Mammary epithelial cell (primary cell): ENCODE measurements at regions of chr19 and their contacts with region 1.

Region 1: DNA sequence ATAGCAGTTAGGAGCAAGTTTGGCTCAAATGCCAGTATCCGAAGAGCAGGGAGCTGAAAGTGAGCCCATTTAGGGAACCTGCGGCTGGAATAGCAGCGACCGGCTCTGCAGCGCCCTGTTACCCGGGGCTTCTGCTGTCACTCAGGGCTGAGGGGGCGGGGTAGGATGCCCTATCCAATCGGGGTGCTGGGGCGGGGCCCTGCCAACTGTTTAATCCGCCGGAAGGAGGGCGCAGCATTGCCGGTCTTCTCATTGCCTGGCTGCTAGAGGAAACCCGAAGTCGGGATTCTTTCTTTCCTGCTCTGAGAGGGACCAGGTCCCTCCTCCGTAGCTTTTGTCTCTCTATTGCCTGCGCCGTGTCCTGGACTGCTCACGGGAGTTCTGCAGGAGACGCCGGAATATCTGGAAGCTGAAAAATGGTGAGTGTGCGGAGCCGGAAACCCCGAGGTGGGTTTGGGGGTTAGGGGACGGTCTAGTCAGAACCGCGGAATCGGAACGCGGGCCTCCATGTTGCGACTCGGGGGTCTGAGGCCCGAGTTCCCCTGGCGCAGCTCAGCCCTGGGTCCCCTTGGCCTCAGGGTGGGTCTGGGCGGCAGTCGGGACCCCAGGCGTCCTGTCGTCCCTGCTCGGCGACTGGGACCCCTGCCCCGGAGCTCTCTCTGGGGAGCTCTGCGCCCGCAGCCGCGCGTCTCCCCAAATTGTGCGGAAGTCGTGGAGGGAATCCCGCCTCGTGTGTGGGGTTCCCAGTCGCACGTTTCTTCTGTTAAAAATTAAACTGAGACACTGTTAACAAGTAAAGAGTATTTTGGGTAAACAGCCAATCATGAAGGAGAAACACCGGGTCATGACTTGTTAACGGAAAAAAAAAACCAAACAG is 22.8 kb downstream of the ZNF763 start:
- DNase-seq: peak; percentile 91
- H3K4me3 ChIP-seq: peak overlapping the region; percentile 83 to 86 (median 84)
- H3K27ac ChIP-seq: peak overlapping the region; percentile 24
- H3K4me1 ChIP-seq: no peaks in the 10 kb centered on the region
- H3K27me3 ChIP-seq: no peaks in the 10 kb centered on the region
- CTCF ChIP-seq: no peak

Region 2: DNA sequence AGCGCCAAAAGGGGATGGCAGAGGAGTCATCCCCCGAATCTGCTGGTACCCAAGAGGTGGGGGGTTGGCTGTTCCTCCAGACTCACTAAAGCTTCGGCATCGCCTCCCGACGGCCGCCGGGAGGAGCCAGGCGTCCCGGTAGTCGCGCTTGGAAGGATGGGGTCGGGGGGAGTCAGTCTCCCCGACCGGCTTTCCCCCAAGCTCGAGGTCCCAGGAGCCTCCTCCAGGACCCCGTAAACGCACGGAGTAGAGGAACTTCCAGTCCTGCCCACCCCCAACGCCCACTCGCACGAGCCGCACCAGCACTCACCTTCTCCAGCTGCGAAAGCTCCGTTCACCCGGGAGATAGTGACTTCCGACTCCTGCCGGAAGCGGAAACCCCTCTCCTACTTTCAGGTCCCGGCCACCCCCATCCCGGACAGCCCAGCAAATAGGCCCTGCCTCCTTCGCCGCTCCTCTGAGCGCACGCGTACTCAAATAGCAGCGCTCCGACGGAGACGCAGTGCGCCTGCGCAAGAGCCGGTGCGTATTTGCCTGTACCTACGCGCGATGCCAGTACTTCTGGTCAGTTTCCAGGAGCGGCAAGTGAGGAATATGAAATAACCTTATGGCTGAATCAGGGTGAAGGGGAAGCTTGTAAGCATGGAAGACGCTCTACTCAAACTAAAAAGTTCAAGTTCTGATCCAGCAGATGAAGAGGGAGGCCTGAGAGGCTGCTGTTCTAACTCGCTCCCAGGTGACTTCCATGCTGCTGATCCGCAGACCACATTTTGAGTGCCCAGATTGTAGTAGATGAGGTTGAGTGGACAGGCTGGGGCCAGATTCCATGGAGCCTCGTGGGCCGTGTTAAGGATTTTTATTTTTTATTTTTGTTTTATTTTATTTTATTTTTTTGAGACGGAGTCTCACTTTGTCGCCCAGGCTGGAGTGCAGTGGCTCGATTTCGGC is 428.5 kb before region 1 on chr19 and contains the start of gene ELOF1:
- CTCF ChIA-PET with region 1: interaction called, 3 read pairs
- dilution Hi-C with region 1: no loop called
- in situ Hi-C with region 1: no loop called
- intact Hi-C with region 1: loop called (anchors 1 kb)
- DNase-seq: peak; percentile 97
- H3K4me3 ChIP-seq: peak within 1 kb of the TSS; percentile 66 to 97 (median 79)
- H3K27ac ChIP-seq: peak within 1 kb of the TSS; percentile 43
- H3K4me1 ChIP-seq: peaks cover 6% of the 10 kb centered on the region
- H3K27me3 ChIP-seq: no peaks in the 10 kb centered on the region
- CTCF ChIP-seq: peak in 1 of 2 donors; percentile 40
- total RNA-seq, gene ELOF1: 34.7 to 71.2 TPM

Region 3: GRCh38 chr19:11814029-11814699 is 173.5 kb before region 1 on chr19 and contains the start of gene ZNF440:
- CTCF ChIA-PET with region 1: interaction called, 4 read pairs
- dilution Hi-C with region 1: no loop called
- in situ Hi-C with region 1: no loop called
- intact Hi-C with region 1: loop called (anchors 5 kb)
- DNase-seq: peak; percentile 92
- H3K4me3 ChIP-seq: peak within 1 kb of the TSS; percentile 95 to 97 (median 97)
- H3K27ac ChIP-seq: peak within 1 kb of the TSS; percentile 72
- H3K4me1 ChIP-seq: no peaks in the 10 kb centered on the region
- H3K27me3 ChIP-seq: no peaks in the 10 kb centered on the region
- CTCF ChIP-seq: no peak
- total RNA-seq, gene ZNF440: 8.3 to 10.4 TPM

Region 4: GRCh38 chr19:11924886-11925650 is 62.6 kb before region 1 on chr19 and contains the start of gene ZNF700:
- CTCF ChIA-PET with region 1: interaction called, 4 read pairs
- dilution Hi-C with region 1: no loop called
- in situ Hi-C with region 1: no loop called
- intact Hi-C with region 1: loop called (anchors 1 kb)
- DNase-seq: peak; percentile 89
- H3K4me3 ChIP-seq: peak within 1 kb of the TSS; percentile 75 to 91 (median 79)
- H3K27ac ChIP-seq: peak within 1 kb of the TSS; percentile 65
- H3K4me1 ChIP-seq: peaks cover 6% of the 10 kb centered on the region
- H3K27me3 ChIP-seq: no peaks in the 10 kb centered on the region
- CTCF ChIP-seq: no peak
- total RNA-seq, gene ZNF700: 8.2 to 10.4 TPM

Region 5: DNA sequence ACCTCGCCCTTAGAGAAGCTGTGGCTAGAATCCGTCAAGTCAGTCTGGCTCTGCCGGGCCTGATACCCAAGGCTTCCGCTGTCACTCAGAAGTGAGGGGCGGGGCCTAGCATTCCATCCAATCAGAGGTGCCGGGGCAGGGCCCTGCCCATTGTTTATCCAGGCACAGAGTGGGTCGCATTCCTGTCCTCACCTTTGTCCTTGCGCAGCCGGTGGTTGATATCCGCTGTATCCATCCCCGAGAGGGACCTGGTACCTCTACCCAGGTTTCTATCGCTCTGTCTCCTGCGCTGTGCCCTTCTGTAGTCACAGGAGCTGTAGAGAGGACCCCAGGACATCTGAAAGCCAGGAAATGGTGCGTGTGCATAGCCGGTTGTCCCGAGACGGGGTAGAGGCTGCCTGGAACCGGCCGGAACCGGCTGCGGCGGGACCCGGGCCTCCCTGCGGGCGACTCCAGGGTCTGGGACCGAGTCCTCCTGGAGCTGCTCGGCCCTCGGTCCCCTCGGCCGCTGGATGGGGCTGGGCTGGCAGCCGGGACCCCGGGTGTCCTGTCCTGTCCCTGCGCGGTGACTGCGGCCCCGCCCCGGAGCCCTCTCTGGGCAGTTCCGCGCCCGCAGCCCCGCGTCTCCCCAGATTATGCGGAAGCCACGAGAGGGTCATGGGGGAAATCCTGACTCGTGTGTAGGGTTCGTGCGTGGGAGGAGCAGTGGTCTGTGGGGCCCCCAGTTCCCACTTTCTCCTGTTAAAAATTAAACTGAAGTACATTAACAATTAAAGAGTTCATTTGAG is 22.6 kb before region 1 on chr19 and contains the start of gene ZNF763:
- CTCF ChIA-PET with region 1: interaction called, 3 read pairs
- dilution Hi-C with region 1: no loop called
- in situ Hi-C with region 1: no loop called
- intact Hi-C with region 1: loop called (anchors 1 kb)
- DNase-seq: peak; percentile 70
- H3K4me3 ChIP-seq: peak within 1 kb of the TSS; percentile 39 to 63 (median 46)
- H3K27ac ChIP-seq: no peak within 1 kb of the TSS
- H3K4me1 ChIP-seq: no peaks in the 10 kb centered on the region
- H3K27me3 ChIP-seq: no peaks in the 10 kb centered on the region
- CTCF ChIP-seq: no peak
- total RNA-seq, gene ZNF763: 1.6 to 2.0 TPM

Region 6: DNA sequence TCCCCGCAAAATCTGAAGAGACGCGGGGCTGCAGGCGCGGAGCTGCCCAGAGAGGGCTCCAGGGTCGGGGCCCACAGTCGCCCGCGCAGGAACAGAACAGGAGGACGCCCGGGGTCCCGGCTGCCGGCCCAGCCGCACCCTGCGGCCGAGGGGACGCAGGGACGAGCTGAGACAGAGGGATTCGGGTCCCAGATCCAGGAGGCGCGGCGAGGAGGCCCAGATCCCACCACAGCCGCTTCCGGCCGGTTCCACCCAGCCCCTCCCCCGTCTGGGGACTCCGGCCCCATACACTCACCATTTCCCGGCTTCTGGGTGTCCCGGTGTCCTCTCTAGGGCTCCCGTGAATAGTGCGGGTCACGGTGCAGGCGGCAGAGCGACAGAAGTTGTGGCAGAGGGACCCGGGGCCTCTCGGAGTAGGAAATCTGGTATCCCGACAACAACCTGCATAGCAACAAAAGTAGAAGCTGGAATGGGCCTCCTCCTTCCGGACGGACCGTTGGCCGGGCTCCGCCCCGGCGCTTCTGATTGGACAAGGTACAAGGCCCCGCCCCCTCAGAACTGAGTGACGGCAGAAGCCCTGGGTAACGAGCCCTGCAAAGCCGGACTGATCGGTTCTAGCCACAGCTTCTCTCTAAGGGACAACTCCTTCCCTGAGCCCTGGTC is 152.4 kb after region 1 on chr19 and contains the start of gene ZNF20:
- CTCF ChIA-PET with region 1: no interaction called
- dilution Hi-C with region 1: no loop called
- in situ Hi-C with region 1: no loop called
- intact Hi-C with region 1: loop called (anchors 1 kb)
- DNase-seq: peak; percentile 91
- H3K4me3 ChIP-seq: peak within 1 kb of the TSS; percentile 61 to 99 (median 88)
- H3K27ac ChIP-seq: peak within 1 kb of the TSS; percentile 81
- H3K4me1 ChIP-seq: peaks cover 11% of the 10 kb centered on the region
- H3K27me3 ChIP-seq: no peaks in the 10 kb centered on the region
- CTCF ChIP-seq: no peak
- total RNA-seq, gene ZNF20: 5.2 to 7.3 TPM